ENCODE measurements at regions of chr16 and their contacts with region 1.

Region 1: GRCh38 chr16:88282225-88283018 is 100.3 kb upstream of the ZNF469 start:
- DNase-seq: peak; percentile 21
- H3K4me3 ChIP-seq: no peak overlapping the region
- H3K27ac ChIP-seq: peak overlapping the region; percentile 57
- H3K27me3 ChIP-seq: no peaks in the 10 kb centered on the region
- CTCF ChIP-seq: no peak

Region 2: GRCh38 chr16:88383401-88384221 is 101.2 kb after region 1 on chr16:
- CTCF ChIA-PET with region 1: no interaction called
- POLR2A ChIA-PET with region 1: interaction called, 10 read pairs
- DNase-seq: no peak
- H3K4me3 ChIP-seq: peak overlapping the region; percentile 79
- H3K27ac ChIP-seq: peak overlapping the region; percentile 73
- H3K27me3 ChIP-seq: no peaks in the 10 kb centered on the region
- CTCF ChIP-seq: peak; percentile 68

Region 3: DNA sequence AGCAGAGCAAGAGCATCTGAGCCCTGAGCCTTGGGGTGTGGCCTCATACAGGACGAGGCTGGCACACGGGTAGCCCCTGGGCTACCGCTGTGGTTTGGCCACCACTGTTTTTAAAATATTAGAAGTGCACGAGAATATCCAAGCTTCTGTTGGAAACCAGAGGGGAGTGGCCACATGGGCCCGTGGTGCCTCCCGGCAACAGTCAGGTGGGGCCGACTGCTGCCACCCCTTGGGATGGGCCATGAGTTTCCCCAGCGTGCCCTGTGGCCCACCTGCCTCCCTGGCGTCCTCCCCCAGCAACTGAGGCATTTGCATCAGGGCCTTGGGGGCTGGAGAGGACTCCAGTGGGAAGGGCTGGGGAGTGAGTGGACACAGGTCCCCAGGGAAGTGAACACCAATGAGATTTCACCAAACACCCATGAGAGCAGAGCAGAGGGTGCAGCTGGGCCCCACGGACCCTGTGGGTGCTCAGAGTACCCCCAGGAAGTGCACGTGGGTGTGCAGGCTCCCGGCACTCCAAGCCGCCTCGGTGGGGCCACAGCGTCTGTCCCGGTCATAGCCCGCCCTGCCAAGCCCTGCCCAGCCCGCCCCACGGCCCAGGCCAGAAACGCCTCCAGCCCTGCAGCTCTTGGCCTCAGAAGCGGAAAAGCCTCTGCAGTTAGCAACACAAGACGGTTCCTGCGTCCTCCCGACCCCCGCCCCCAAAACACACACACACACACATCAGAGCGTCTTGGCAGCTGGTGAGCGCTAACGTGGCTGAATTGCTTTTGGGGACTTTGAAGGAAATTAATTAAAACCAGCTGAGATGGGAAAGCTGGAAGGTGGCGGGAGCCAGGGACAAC is 123.0 kb after region 1 on chr16:
- CTCF ChIA-PET with region 1: no interaction called
- POLR2A ChIA-PET with region 1: no interaction called
- DNase-seq: no peak
- H3K4me3 ChIP-seq: no peak overlapping the region
- H3K27ac ChIP-seq: peak overlapping the region; percentile 11
- H3K27me3 ChIP-seq: no peaks in the 10 kb centered on the region
- CTCF ChIP-seq: no peak